ENCODE measurements at regions of chr21 and their contacts with region 1.

Region 1: GRCh38 chr21:20040768-20041167 is 957.4 kb upstream of the NCAM2 start:
- DNase-seq: peak; percentile 14
- ATAC-seq: no peak
- H3K4me3 ChIP-seq: no peak overlapping the region
- H3K27ac ChIP-seq: no peak overlapping the region
- H3K4me1 ChIP-seq: no peaks in the 10 kb centered on the region
- H3K27me3 ChIP-seq: no peaks in the 10 kb centered on the region
- CTCF ChIP-seq: peak; percentile 53

Region 2: DNA sequence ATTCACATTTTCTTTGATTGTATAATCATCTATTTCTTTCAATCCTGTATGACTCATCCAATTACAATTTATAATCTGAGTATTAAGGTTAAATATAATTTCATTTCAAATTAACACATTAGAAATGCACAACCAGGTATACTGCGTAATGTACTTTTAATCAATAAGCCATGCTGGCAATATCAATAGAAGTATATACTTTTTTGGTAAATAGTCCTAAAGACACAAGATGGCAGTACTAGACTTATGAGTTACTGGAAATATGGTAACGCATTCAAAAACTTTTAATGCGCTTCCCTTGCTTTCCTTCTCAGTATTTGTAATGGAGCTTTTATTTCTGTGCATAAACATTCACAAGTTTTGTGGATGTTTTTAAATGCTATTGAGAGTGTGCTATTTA is 475.2 kb before region 1 on chr21:
- CTCF ChIA-PET with region 1: no interaction called
- POLR2A ChIA-PET with region 1: no interaction called
- intact Hi-C with region 1: loop called (anchors 2 kb)
- DNase-seq: peak; percentile 14
- ATAC-seq: no peak
- H3K4me3 ChIP-seq: no peak overlapping the region
- H3K27ac ChIP-seq: no peak overlapping the region
- H3K4me1 ChIP-seq: no peaks in the 10 kb centered on the region
- H3K27me3 ChIP-seq: no peaks in the 10 kb centered on the region
- CTCF ChIP-seq: peak; percentile 34

Region 3: DNA sequence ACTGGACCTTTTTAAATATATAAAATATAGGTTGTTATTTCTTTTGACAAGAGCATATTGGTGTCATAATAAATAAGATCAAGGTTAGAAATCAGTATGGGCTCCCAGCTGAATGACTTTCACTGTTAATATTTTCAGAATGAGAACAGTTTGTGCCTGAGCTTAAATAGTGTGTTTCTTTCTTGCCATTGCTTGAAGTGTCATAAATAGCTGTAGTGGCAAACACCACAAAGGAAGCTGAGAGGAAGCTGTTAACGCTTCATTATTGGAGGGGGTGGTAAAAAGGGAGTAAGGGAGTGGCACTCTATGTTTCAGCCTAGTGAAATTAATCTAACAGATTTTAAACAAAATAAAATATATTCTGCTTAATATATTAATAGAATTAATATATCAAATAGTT is 132.4 kb before region 1 on chr21:
- CTCF ChIA-PET with region 1: no interaction called
- POLR2A ChIA-PET with region 1: no interaction called
- intact Hi-C with region 1: no loop called
- DNase-seq: no peak
- ATAC-seq: no peak
- H3K4me3 ChIP-seq: no peak overlapping the region
- H3K27ac ChIP-seq: no peak overlapping the region
- H3K4me1 ChIP-seq: no peaks in the 10 kb centered on the region
- H3K27me3 ChIP-seq: no peaks in the 10 kb centered on the region
- CTCF ChIP-seq: no peak

Region 4: GRCh38 chr21:20083336-20083735 is 42.6 kb after region 1 on chr21:
- CTCF ChIA-PET with region 1: no interaction called
- POLR2A ChIA-PET with region 1: no interaction called
- intact Hi-C with region 1: no loop called
- DNase-seq: no peak
- ATAC-seq: no peak
- H3K4me3 ChIP-seq: no peak overlapping the region
- H3K27ac ChIP-seq: no peak overlapping the region
- H3K4me1 ChIP-seq: no peaks in the 10 kb centered on the region
- H3K27me3 ChIP-seq: no peaks in the 10 kb centered on the region
- CTCF ChIP-seq: no peak